Activated CD4-positive, alpha-beta T cell treated with anti-CD3 and anti-CD28 coated beads, Interleukin-2, amount 10 ng/mL, durations not matched to agents 24 days and 14 days (primary cell): ENCODE measurements at regions of chr22 and their contacts with region 1.

Region 1: GRCh38 chr22:43993027-43993760 is 30.9 kb upstream of the PARVB start:
- DNase-seq: peak; percentile 89
- H3K4me3 Mint-ChIP-seq: no peak overlapping the region
- H3K27ac Mint-ChIP-seq: no peak overlapping the region
- H3K4me1 Mint-ChIP-seq: peaks cover 20% of the 10 kb centered on the region
- H3K27me3 Mint-ChIP-seq: no peaks in the 10 kb centered on the region

Region 2: DNA sequence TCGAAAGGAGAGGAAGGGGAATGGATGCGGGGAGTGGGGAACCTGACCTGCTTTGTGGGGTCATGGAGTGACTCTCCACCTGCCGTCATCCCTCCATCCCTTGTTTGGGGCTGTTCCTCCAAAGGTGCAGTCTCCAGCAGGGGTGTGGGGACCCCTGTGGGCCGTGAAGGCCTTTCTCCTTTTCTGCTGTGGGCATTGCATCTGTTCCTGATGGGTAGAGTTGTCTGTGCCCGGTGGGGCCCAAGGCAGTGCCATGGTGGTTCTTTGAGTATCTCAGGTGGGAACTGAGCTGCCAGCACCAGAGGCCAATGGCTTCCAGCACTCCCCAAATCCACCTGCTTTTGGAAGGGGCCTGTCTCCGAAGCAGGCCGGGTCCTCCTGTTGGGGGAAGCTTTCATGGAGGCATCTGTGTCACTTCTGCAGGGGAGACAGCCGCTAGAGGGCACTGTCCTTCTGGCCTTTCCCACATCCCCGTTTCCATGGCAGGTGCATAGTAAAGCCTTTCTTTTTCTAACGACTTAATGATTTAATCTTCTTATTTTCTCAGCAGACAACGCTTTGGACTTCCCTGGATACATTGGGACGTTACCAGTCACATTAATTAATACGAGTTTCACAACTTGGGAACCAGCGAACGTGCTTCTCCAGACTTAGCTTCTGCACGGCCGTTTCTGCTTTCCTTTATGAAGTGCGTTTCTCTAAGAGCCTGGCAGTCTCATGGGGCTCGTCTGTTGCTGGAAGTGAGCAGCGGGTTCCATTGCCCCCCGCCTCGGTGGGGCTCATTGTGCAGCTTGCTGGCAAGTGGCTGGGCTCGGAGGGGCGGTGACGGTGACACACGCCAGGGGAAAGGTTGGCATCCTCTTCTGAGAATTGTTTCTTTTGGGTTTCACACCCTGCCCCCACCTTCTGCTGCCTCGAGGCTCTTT is 88.0 kb after region 1 on chr22:
- intact Hi-C with region 1: loop called (anchors 1 kb)
- DNase-seq: peak; percentile 89
- H3K4me3 Mint-ChIP-seq: no peak overlapping the region
- H3K27ac Mint-ChIP-seq: no peak overlapping the region
- H3K4me1 Mint-ChIP-seq: peaks cover 1% of the 10 kb centered on the region
- H3K27me3 Mint-ChIP-seq: no peaks in the 10 kb centered on the region

Region 3: GRCh38 chr22:44567846-44568493 is 574.8 kb after region 1 on chr22:
- intact Hi-C with region 1: loop called (anchors 5 kb)
- DNase-seq: peak; percentile 82
- H3K4me3 Mint-ChIP-seq: no peak overlapping the region
- H3K27ac Mint-ChIP-seq: no peak overlapping the region
- H3K4me1 Mint-ChIP-seq: no peaks in the 10 kb centered on the region
- H3K27me3 Mint-ChIP-seq: peaks cover 20% of the 10 kb centered on the region

Region 4: GRCh38 chr22:44625981-44626687 is 632.9 kb after region 1 on chr22:
- intact Hi-C with region 1: loop called (anchors 1 kb)
- DNase-seq: peak; percentile 94
- H3K4me3 Mint-ChIP-seq: no peak overlapping the region
- H3K27ac Mint-ChIP-seq: no peak overlapping the region
- H3K4me1 Mint-ChIP-seq: peaks cover 4% of the 10 kb centered on the region
- H3K27me3 Mint-ChIP-seq: peaks cover 3% of the 10 kb centered on the region